GM10248 (cell line): ENCODE measurements at regions of chr21 and their contacts with region 1.

Region 1: GRCh38 chr21:34722684-34723300 is 54.0 kb downstream of the CLIC6 start:
- DNase-seq: peak; percentile 58
- CTCF ChIP-seq: peak; percentile 58

Region 2: GRCh38 chr21:34617753-34618339 is 104.9 kb before region 1 on chr21:
- CTCF ChIA-PET with region 1: no interaction called
- POLR2A ChIA-PET with region 1: no interaction called
- DNase-seq: no peak
- CTCF ChIP-seq: no peak

Region 3: DNA sequence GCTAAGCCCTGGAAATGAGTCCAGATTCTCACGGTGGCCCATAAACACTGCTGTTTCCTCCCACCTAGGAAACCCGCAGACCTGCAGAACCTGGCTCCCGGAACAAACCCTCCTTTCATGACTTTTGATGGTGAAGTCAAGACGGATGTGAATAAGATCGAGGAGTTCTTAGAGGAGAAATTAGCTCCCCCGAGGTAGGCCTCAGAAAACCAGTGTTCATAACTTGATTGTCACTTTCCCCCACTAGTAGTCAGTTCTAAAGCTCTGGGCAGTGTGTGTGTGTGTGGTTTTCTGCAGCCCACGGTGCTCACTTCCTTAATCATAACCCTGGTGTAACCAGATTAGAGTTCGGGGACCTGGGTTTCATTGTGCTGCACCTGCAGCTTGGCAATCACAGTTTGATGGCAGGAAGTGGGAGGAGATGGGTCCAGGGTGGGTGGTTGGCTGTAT is 14.9 kb before region 1 on chr21:
- CTCF ChIA-PET with region 1: interaction called, 33 read pairs
- POLR2A ChIA-PET with region 1: no interaction called
- DNase-seq: peak; percentile 81
- CTCF ChIP-seq: no peak

Region 4: GRCh38 chr21:34737107-34737506 is 14.3 kb after region 1 on chr21:
- CTCF ChIA-PET with region 1: interaction called, 12 read pairs
- POLR2A ChIA-PET with region 1: no interaction called
- DNase-seq: no peak
- CTCF ChIP-seq: no peak